Upper lobe of right lung (tissue), 1 donor: ENCODE measurements at regions of chr14 and their contacts with region 1.

Region 1: GRCh38 chr14:75088574-75089373 is 19.3 kb downstream of the ZC2HC1C start:
- DNase-seq: no peak
- ATAC-seq: peak; percentile 82
- H3K4me3 ChIP-seq: no peak overlapping the region
- H3K27ac ChIP-seq: no peak overlapping the region
- H3K4me1 ChIP-seq: no peaks in the 10 kb centered on the region
- H3K27me3 ChIP-seq: no peaks in the 10 kb centered on the region
- CTCF ChIP-seq: peak; percentile 75

Region 2: GRCh38 chr14:74913986-74914573 is 174.7 kb before region 1 on chr14:
- intact Hi-C with region 1: loop called (anchors 10 kb)
- DNase-seq: no peak
- ATAC-seq: peak; percentile 73
- H3K4me3 ChIP-seq: no peak overlapping the region
- H3K27ac ChIP-seq: no peak overlapping the region
- H3K4me1 ChIP-seq: peaks cover 10% of the 10 kb centered on the region
- H3K27me3 ChIP-seq: no peaks in the 10 kb centered on the region
- CTCF ChIP-seq: peak; percentile 69

Region 3: GRCh38 chr14:74945823-74946682 is 142.7 kb before region 1 on chr14:
- intact Hi-C with region 1: loop called (anchors 10 kb)
- DNase-seq: peak; percentile 86
- ATAC-seq: peak; percentile 82
- H3K4me3 ChIP-seq: no peak overlapping the region
- H3K27ac ChIP-seq: no peak overlapping the region
- H3K4me1 ChIP-seq: peaks cover 20% of the 10 kb centered on the region
- H3K27me3 ChIP-seq: peaks cover 3% of the 10 kb centered on the region
- CTCF ChIP-seq: peak; percentile 95